Activated B cell treated with CpG ODN at 0.5 μM for 24 hours (primary cell): ENCODE measurements at regions of chr13 and their contacts with region 1.

Region 1: GRCh38 chr13:20566898-20567874 is at the start of gene IFT88:
- DNase-seq: peak; percentile 92
- ATAC-seq: peak; percentile 90
- H3K4me3 Mint-ChIP-seq: peak within 1 kb of the TSS; percentile 92
- H3K27ac Mint-ChIP-seq: peak within 1 kb of the TSS; percentile 89
- H3K4me1 Mint-ChIP-seq: peaks cover 18% of the 10 kb centered on the region
- H3K27me3 Mint-ChIP-seq: no peaks in the 10 kb centered on the region
- CTCF ChIP-seq: no peak
- total RNA-seq, gene IFT88: 16.4 and 17.3 TPM in 2 replicates

Region 2: DNA sequence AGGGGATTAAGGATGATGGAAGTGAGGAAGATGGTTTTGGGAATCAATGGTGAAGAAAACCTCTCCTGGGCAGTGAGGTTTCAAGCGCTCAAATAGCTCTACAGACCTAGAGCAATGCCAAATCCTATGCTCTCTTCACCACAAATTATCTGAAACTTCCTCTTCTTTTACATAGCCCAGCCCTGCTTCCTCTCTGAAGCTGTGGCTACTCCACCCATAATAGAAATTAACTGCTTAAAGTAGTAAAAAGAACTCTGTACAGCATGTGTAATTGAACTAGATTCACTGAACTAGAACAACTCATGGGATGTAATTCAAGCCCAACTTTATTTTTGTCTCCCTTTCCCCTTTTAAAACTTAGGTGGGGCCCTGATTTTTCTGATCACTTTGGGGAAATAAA is 20.6 kb before region 1 on chr13:
- CTCF ChIA-PET with region 1: no interaction called
- POLR2A ChIA-PET with region 1: interaction called, 14 read pairs
- intact Hi-C with region 1: loop called (anchors 1 kb)
- DNase-seq: no peak
- ATAC-seq: peak; percentile 63
- H3K4me3 Mint-ChIP-seq: peak overlapping the region; percentile 29
- H3K27ac Mint-ChIP-seq: peak overlapping the region; percentile 48
- H3K4me1 Mint-ChIP-seq: peaks cover 47% of the 10 kb centered on the region
- H3K27me3 Mint-ChIP-seq: no peaks in the 10 kb centered on the region
- CTCF ChIP-seq: no peak

Region 3: GRCh38 chr13:20580257-20580656 is 13.1 kb after region 1 on chr13:
- CTCF ChIA-PET with region 1: no interaction called
- POLR2A ChIA-PET with region 1: no interaction called
- intact Hi-C with region 1: no loop called
- DNase-seq: no peak
- ATAC-seq: no peak
- H3K4me3 Mint-ChIP-seq: no peak overlapping the region
- H3K27ac Mint-ChIP-seq: no peak overlapping the region
- H3K4me1 Mint-ChIP-seq: no peaks in the 10 kb centered on the region
- H3K27me3 Mint-ChIP-seq: no peaks in the 10 kb centered on the region
- CTCF ChIP-seq: no peak

Region 4: DNA sequence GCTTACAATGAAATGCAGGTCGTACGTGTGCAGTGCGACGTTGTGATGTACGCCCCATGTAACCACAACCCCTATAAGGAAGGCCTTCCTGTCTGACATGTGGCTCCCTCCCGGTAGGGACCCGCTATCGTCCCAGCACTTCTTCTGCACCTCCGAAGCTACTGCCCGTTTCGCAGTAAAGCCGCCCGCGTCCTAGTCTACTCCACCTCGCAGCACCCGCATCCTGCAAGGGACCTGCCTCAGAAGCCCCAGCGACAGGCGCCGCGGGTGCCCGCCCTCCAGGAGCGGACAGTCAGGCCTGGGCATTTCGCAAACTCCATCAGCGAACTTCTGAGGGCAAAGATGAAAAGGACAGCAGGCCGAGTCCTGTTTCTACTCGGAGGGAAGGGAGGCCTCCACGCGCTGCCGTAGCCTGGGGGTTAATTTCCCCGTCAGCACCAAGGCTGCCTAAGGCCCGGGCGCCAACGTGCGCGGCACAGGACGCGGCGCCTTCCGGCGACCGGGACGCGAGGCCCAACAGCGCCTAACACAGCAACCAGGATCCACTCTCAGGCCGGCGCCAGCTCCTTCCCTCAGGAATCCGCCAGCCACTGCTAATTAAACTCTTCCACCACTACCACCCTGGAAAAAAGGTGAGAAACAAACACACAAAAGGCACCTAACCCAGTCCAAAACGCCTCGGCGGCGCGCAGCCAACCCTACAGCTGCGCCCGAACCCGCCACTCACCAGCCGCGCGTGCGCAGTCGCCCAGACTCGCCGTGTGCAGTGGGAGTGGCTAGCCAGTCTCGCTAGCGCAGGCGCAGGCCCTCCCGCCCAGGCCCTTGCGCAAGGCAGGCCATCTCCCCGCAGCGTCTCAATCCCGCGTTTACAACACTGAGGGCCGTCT is 206.3 kb after region 1 on chr13 and contains the start of gene EEF1AKMT1:
- CTCF ChIA-PET with region 1: no interaction called
- POLR2A ChIA-PET with region 1: no interaction called
- intact Hi-C with region 1: loop called (anchors 1 kb)
- DNase-seq: peak; percentile 94
- ATAC-seq: peak; percentile 95
- H3K4me3 Mint-ChIP-seq: peak within 1 kb of the TSS; percentile 98
- H3K27ac Mint-ChIP-seq: peak within 1 kb of the TSS; percentile 99
- H3K4me1 Mint-ChIP-seq: peaks cover 21% of the 10 kb centered on the region
- H3K27me3 Mint-ChIP-seq: no peaks in the 10 kb centered on the region
- CTCF ChIP-seq: no peak
- total RNA-seq, gene EEF1AKMT1: 3.9 and 7.4 TPM in 2 replicates

Region 5: GRCh38 chr13:20902438-20903163 is 335.4 kb after region 1 on chr13 and contains the start of gene XPO4:
- CTCF ChIA-PET with region 1: no interaction called
- POLR2A ChIA-PET with region 1: interaction called, 3 read pairs
- intact Hi-C with region 1: loop called (anchors 1 kb)
- DNase-seq: peak; percentile 80
- ATAC-seq: peak; percentile 93
- H3K4me3 Mint-ChIP-seq: peak within 1 kb of the TSS; percentile 91
- H3K27ac Mint-ChIP-seq: peak within 1 kb of the TSS; percentile 86
- H3K4me1 Mint-ChIP-seq: peaks cover 32% of the 10 kb centered on the region
- H3K27me3 Mint-ChIP-seq: peaks cover 2% of the 10 kb centered on the region
- CTCF ChIP-seq: no peak
- total RNA-seq, gene XPO4: 25.2 and 27.4 TPM in 2 replicates